ENCODE measurements at regions of chr2 and their contacts with region 1.

Region 1: DNA sequence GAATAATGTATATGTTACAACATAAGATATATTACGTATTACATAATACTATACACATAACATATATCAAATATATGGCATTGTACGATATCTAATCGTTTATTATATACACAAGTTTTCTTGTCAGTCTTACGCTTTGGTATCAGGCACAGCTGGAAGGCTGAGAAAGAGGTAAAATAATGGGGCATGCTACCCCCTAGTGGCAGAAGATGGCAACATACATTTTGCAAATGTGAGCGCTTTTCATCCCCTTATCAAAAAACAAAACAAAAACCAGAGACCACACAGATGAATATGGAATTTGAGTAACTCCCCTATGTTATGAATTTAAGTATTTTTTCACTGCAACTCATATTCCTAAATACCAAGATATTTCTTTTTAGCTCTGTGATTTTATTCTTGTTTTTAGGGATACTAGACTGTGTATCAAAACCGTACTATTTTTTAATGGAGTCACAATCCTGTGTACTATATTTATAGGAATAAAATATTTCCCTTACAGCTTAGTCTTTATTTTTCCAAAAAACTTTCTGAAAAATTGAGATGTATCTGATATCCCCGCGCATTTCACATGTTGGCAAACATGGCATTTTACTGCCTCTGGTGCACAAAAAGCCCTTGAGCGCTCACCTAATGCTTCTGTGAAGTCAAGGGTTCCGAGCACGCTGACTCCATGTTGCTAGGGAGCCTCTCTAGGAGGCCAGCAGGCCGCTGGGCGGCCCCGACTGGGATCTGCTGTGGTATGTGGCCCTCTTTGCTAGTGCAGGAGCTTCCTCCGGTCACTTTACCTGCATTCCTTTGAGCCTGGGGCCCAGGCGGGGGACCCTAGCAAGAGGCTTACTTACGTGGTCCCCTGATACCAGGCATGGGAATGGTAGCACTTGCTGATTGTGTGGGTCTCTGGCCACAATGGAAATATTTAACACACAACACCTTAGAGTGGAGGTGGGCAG is 62.5 kb downstream of the SLC4A3 start:
- DNase-seq: peak in 1 of 2 experiments; percentile 66
- H3K4me3 ChIP-seq: no peak overlapping the region; a peak in 1 of 8 replicates
- H3K27ac ChIP-seq: no peak overlapping the region
- H3K4me1 ChIP-seq: peaks cover 0 to 11% (median 2%) of the 10 kb centered on the region in 4 experiments; a peak in 6 of 7 replicates
- H3K27me3 ChIP-seq: no peaks in the 10 kb centered on the region
- CTCF ChIP-seq: peak in 2 of 3 experiments; percentile 69 to 82; a peak in 3 of 4 replicates
- EP300 ChIP-seq: no peak
- POLR2A ChIP-seq: no peak
- RAD21 ChIP-seq: peak; percentile 72 to 83

Region 2: DNA sequence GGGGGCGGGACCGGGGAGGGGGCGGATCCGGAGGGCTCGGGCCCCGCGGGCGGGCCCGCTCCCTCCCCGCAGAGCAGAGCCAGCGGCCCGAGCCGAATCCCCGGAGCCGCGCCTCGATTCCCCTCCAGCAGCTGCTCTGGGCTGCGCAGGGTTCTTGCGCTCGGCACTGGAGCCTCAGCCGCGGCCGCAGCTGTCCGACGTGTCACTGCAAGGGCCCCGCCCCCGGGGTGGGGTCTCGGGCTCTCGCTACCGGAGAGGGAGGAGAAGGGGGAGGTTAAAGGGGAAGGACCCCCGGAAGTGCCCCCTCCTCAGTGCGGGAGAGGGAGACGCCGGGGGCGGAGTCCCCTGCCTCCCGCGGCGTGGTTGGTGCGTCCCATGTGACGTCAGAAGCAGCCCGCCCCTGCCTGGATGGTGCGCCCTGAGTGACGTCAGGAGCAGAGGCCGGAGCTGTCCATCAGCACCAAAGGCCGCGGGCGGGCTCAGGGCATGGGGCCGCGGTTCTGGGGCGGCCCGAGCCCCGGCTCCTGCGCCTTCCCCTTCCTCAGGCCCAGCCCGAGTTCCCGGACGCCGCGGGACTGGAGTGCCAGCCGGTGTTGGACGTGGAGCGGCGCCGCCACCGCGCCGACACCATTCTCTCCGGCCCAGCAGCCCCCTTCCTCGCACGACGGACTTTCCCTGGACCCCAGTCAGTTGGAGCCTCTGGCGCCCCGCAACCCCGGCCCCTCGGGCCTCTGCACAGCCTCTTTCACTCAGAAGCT is 146.2 kb before region 1 on chr2 and contains the starts of genes CHPF and TMEM198:
- CTCF ChIA-PET with region 1: interaction called, 16 read pairs
- POLR2A ChIA-PET with region 1: interaction called, 3 read pairs
- DNase-seq: peak; percentile 98
- H3K4me3 ChIP-seq: peak within 1 kb of the TSS; percentile 73 to 90 (median 80)
- H3K27ac ChIP-seq: peak within 1 kb of the TSS; percentile 19; the same call in 1 of the 2 replicates
- H3K4me1 ChIP-seq: peaks cover 2 to 13% (median 7%) of the 10 kb centered on the region in 4 experiments; a peak in 6 of 7 replicates
- H3K27me3 ChIP-seq: peaks cover 0 to 4% (median 0%) of the 10 kb centered on the region in 4 experiments; a peak in 2 of 7 replicates
- CTCF ChIP-seq: no peak
- EP300 ChIP-seq: peak in 1 of 2 experiments; percentile 88; a peak in 1 of 3 replicates
- POLR2A ChIP-seq: peak in 1 of 2 experiments; percentile 60; a peak in 2 of 3 replicates
- RAD21 ChIP-seq: no peak; a peak in 1 of 4 replicates
- total RNA-seq, gene CHPF: 62.9 and 68.1 TPM in 2 replicates
- total RNA-seq, gene TMEM198: 10.2 and 11.0 TPM in 2 replicates

Region 3: GRCh38 chr2:219627103-219628100 is 62.5 kb before region 1 on chr2 and contains the start of gene SLC4A3:
- CTCF ChIA-PET with region 1: interaction called, 20 read pairs
- POLR2A ChIA-PET with region 1: interaction called, 4 read pairs
- DNase-seq: peak in 1 of 2 experiments; percentile 65
- H3K4me3 ChIP-seq: peak within 1 kb of the TSS; percentile 31 to 85 (median 58)
- H3K27ac ChIP-seq: no peak within 1 kb of the TSS
- H3K4me1 ChIP-seq: peaks cover 0 to 12% (median 9%) of the 10 kb centered on the region in 4 experiments; a peak in 5 of 7 replicates
- H3K27me3 ChIP-seq: peaks cover 0 to 11% (median 6%) of the 10 kb centered on the region in 4 experiments; a peak in 5 of 7 replicates
- CTCF ChIP-seq: peak in 1 of 3 experiments; percentile 19; a peak in 1 of 4 replicates
- EP300 ChIP-seq: no peak
- POLR2A ChIP-seq: 0 out of 3 replicates have a peak, but pooled peaks of 1 of the 2 experiments have one; percentile 48
- RAD21 ChIP-seq: peak; percentile 5 to 10; a peak in 1 of 4 replicates
- total RNA-seq, gene SLC4A3: 6.5 and 7.4 TPM in 2 replicates

Region 4: GRCh38 chr2:219642465-219643080 is 47.4 kb before region 1 on chr2:
- CTCF ChIA-PET with region 1: interaction called, 175 read pairs
- POLR2A ChIA-PET with region 1: interaction called, 12 read pairs
- DNase-seq: peak; percentile 95 to 96
- H3K4me3 ChIP-seq: peak overlapping the region in 1 of 4 experiments; percentile 13; a peak in 1 of 8 replicates
- H3K27ac ChIP-seq: no peak overlapping the region
- H3K4me1 ChIP-seq: peaks cover 0 to 6% (median 2%) of the 10 kb centered on the region in 4 experiments; a peak in 5 of 7 replicates
- H3K27me3 ChIP-seq: peaks cover 0 to 6% (median 3%) of the 10 kb centered on the region in 4 experiments; a peak in 5 of 7 replicates
- CTCF ChIP-seq: peak in 2 of 3 experiments; percentile 100; a peak in 3 of 4 replicates
- EP300 ChIP-seq: peak in 1 of 2 experiments; percentile 23; a peak in 1 of 3 replicates
- POLR2A ChIP-seq: 0 out of 3 replicates have a peak, but pooled peaks of 1 of the 2 experiments have one; percentile 17
- RAD21 ChIP-seq: peak; percentile 95 to 96

Region 5: DNA sequence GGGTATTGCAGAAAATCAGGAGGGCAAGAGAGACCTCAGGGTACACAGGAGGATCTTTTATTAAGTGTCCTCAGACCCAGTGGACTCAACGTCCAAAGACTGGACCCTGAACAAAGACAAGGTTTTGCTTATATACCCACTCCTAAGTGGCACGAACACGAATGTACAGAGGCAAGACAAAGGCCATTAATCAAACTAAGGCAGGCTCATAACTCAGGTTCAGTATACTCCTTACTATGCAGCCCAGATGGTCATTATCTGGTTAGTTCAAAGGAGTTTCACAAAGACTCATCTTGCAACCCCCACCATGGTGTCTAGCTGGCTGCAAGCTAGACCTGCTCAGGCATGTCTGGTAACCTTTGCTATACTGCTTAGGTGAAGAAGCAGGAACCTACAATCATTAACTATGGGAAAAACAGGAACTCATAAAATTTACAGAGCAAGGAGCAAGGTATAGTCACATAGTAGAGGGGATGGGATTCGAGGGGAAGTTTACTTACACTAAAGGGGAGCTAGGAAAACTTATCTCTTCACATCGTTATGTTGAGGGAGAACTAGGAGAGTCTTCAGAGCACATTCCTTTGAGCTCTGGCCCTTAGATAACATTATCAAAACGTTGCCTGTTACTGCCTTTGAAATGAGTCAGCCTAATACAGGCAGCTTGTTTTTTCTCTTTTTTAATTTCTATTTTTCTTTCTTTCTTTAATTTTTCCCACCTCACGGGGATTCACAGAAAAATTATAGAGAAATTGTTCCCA is 28.6 kb before region 1 on chr2:
- CTCF ChIA-PET with region 1: interaction called, 49 read pairs
- POLR2A ChIA-PET with region 1: interaction called, 3 read pairs
- DNase-seq: no peak
- H3K4me3 ChIP-seq: no peak overlapping the region
- H3K27ac ChIP-seq: no peak overlapping the region
- H3K4me1 ChIP-seq: peaks cover 0 to 3% (median 1%) of the 10 kb centered on the region in 4 experiments; a peak in 1 of 7 replicates
- H3K27me3 ChIP-seq: no peaks in the 10 kb centered on the region
- CTCF ChIP-seq: no peak
- EP300 ChIP-seq: no peak
- POLR2A ChIP-seq: no peak
- RAD21 ChIP-seq: no peak

Region 6: DNA sequence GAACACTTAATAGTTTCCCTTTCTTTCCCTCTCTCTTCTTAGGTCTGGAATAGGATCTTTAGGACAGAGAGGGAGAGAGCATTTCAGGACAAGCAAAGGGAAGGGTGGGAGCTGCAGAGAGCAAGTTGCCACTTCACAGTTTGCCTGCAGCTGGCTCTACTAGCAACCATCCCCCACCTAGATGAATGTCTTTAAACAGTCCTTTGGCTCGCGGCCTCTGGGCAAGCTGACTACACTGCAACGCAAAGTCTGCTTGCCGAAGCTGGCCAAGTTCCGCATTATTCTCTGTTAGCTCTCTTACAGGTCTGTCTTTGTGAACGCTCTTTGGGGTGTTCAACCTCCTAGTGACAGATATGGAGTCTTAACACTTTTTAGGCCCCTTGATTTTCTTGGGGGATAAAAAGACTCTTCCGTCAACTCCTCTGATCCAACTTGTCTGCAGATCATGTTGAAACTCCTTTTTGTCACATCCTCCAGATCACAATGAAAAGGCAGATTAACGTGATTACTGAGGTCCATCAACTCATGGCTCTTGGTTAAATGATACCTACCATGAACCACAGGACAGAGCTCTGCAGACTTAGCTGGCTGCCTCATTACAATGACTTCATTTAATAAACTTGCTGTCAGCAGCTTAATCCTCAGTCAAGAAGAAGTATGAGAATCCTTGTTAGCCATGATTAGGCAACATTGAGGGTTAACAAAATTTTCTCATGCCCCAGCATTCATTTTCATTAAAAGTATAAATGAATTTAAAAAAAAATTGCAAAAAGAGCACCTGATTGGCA is 12.1 kb after region 1 on chr2:
- CTCF ChIA-PET with region 1: interaction called, 54 read pairs
- POLR2A ChIA-PET with region 1: interaction called, 9 read pairs
- DNase-seq: peak in 1 of 2 experiments; percentile 10
- H3K4me3 ChIP-seq: no peak overlapping the region
- H3K27ac ChIP-seq: no peak overlapping the region
- H3K4me1 ChIP-seq: peaks cover 0 to 15% (median 7%) of the 10 kb centered on the region in 4 experiments; a peak in 5 of 7 replicates
- H3K27me3 ChIP-seq: 0 out of 7 replicates have a peak, but pooled peaks cover 0 to 2% (median 0%) of the 10 kb centered on the region in 4 experiments
- CTCF ChIP-seq: no peak
- EP300 ChIP-seq: no peak
- POLR2A ChIP-seq: no peak
- RAD21 ChIP-seq: no peak

Measured in H1 (cell line).